ENCODE measurements at regions of chr2 and their contacts with region 1.

Region 1: DNA sequence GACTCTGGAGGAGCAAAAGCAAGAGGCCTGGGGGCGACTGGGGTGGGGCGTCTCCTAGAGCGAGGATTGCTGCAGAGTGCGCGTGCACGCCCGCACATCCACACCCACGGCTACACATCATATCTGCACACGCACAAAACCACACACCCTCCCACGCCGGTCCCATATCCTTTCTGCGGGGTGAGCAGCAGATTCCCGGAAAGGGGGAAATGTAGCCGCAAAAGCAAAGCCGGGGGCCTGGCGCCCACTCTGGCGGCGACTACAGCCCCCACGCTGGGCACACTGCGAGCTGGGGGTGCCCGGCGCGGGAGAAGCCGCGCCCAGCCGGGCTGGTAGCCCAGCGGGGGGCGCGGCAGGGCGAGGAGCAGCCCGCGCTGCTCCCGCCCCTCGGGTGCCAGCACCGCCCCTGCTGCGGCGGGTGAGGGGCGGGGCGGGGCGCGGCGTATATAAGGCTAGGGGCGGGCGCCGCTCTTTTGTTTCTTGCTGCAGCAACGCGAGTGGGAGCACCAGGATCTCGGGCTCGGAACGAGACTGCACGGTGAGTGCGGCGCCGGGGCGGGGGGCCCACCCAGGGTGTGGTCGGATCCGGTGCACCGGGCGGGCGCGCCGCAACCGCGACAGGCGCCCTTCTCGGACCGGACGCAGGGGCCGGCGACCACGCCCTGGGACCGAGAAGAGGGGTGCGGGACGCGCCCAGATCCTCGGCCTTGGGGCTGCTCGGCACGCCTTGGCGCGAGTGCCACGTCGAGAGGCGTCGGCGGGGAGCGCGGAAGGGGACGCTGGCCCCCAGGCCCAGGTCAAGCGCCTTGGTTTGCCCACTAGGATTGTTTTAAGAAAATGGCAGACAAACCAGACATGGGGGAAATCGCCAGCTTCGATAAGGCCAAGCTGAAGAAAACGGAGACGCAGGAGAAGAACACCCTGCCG is at the start of gene TMSB10:
- DNase-seq: peak; percentile 88 to 95 (median 92)
- H3K4me3 ChIP-seq: peak within 1 kb of the TSS; percentile 69 to 92
- H3K4me3 Mint-ChIP-seq: peak within 1 kb of the TSS; percentile 90 to 97 (median 96)
- H3K27ac ChIP-seq: peak within 1 kb of the TSS; percentile 71
- H3K27ac Mint-ChIP-seq: peak within 1 kb of the TSS; percentile 90 to 97 (median 95)
- H3K4me1 ChIP-seq: peaks cover 34% of the 10 kb centered on the region
- H3K4me1 Mint-ChIP-seq: peaks cover 46 to 74% (median 52%) of the 10 kb centered on the region in 4 donors
- H3K27me3 ChIP-seq: no peaks in the 10 kb centered on the region
- H3K27me3 Mint-ChIP-seq: no peaks in the 10 kb centered on the region
- total RNA-seq, gene TMSB10: 1,218 to 1,245 TPM

Region 2: DNA sequence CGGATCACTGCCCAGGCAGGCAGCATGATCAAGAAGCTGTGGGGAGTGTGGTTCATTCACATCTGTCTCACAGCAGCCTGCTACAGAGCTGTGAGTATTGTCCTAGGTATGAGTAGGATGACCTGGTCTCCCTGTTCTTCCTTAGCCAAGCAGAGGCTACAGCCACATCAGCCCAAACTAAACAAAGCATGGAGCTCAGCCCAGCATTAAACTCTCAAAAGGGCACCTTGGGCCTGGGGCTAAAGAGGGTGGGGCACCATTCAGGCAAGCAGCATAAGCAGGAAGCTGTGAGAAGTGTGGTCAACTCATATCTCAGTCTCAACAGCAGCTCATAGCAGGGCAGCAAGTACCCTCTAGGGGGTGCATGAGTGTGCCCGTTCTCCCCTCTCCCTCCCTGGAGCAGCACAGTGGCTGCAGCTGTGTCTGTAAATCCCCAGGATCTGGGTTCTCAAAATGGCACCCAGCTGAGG is 164.1 kb before region 1 on chr2:
- CTCF ChIA-PET with region 1: no interaction called
- POLR2A ChIA-PET with region 1: interaction called, 11 read pairs
- intact Hi-C with region 1: no loop called
- DNase-seq: peak; percentile 47 to 58 (median 51)
- H3K4me3 ChIP-seq: no peak overlapping the region
- H3K4me3 Mint-ChIP-seq: peak overlapping the region in 4 of 8 donors; percentile 12 to 39 (median 28)
- H3K27ac ChIP-seq: no peak overlapping the region
- H3K27ac Mint-ChIP-seq: peak overlapping the region in 6 of 7 donors; percentile 17 to 87 (median 64)
- H3K4me1 ChIP-seq: peaks cover 22% of the 10 kb centered on the region
- H3K4me1 Mint-ChIP-seq: peaks cover 15 to 28% (median 21%) of the 10 kb centered on the region in 4 donors
- H3K27me3 ChIP-seq: no peaks in the 10 kb centered on the region
- H3K27me3 Mint-ChIP-seq: no peaks in the 10 kb centered on the region

Region 3: DNA sequence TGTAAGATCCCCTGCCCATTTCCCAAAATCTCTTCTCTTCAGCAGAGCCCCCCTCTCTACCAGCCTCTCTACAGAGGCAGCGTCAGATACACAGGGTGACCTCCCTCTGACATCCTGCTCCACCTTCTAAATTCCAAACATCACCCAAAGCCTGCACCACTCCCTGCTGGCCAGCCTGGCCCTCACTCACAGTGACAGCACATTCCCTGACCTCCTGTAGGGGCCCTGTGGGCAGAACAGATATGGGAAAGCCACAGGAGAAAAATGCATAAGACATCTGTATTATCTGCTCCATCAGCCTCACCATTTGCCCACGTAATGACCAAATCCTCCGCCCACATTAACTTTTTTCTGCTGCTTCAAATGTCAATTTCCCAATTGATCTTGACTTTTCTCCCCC is 65.1 kb before region 1 on chr2:
- CTCF ChIA-PET with region 1: interaction called, 3 read pairs
- POLR2A ChIA-PET with region 1: interaction called, 35 read pairs
- intact Hi-C with region 1: no loop called
- DNase-seq: peak in 1 of 5 donors; percentile 10
- H3K4me3 ChIP-seq: peak overlapping the region in 1 of 2 donors; percentile 39
- H3K4me3 Mint-ChIP-seq: peak overlapping the region; percentile 63 to 87 (median 80)
- H3K27ac ChIP-seq: peak overlapping the region; percentile 61
- H3K27ac Mint-ChIP-seq: peak overlapping the region; percentile 92 to 98 (median 96)
- H3K4me1 ChIP-seq: peaks cover 88% of the 10 kb centered on the region
- H3K4me1 Mint-ChIP-seq: peaks cover 74 to 91% (median 84%) of the 10 kb centered on the region in 4 donors
- H3K27me3 ChIP-seq: no peaks in the 10 kb centered on the region
- H3K27me3 Mint-ChIP-seq: no peaks in the 10 kb centered on the region

Region 4: GRCh38 chr2:84870306-84870705 is 35.1 kb before region 1 on chr2:
- CTCF ChIA-PET with region 1: interaction called, 6 read pairs
- POLR2A ChIA-PET with region 1: interaction called, 13 read pairs
- intact Hi-C with region 1: no loop called
- DNase-seq: no peak
- H3K4me3 ChIP-seq: no peak overlapping the region
- H3K4me3 Mint-ChIP-seq: peak overlapping the region in 6 of 8 donors; percentile 4 to 74 (median 38)
- H3K27ac ChIP-seq: no peak overlapping the region
- H3K27ac Mint-ChIP-seq: peak overlapping the region; percentile 48 to 93 (median 81)
- H3K4me1 ChIP-seq: peaks cover 75% of the 10 kb centered on the region
- H3K4me1 Mint-ChIP-seq: peaks cover 56 to 87% (median 72%) of the 10 kb centered on the region in 4 donors
- H3K27me3 ChIP-seq: no peaks in the 10 kb centered on the region
- H3K27me3 Mint-ChIP-seq: no peaks in the 10 kb centered on the region

Region 5: GRCh38 chr2:84919885-84920580 is 14.6 kb after region 1 on chr2:
- CTCF ChIA-PET with region 1: interaction called, 267 read pairs
- POLR2A ChIA-PET with region 1: interaction called, 221 read pairs
- intact Hi-C with region 1: loop called (anchors 1 kb)
- DNase-seq: peak in 1 of 5 donors; percentile 44
- H3K4me3 ChIP-seq: no peak overlapping the region
- H3K4me3 Mint-ChIP-seq: peak overlapping the region in 7 of 8 donors; percentile 22 to 71 (median 52)
- H3K27ac ChIP-seq: no peak overlapping the region
- H3K27ac Mint-ChIP-seq: peak overlapping the region; percentile 61 to 88 (median 79)
- H3K4me1 ChIP-seq: peaks cover 45% of the 10 kb centered on the region
- H3K4me1 Mint-ChIP-seq: peaks cover 22 to 48% (median 33%) of the 10 kb centered on the region in 4 donors
- H3K27me3 ChIP-seq: no peaks in the 10 kb centered on the region
- H3K27me3 Mint-ChIP-seq: no peaks in the 10 kb centered on the region

Region 6: GRCh38 chr2:84970868-84971509 is 65.5 kb after region 1 on chr2 and contains the start of gene KCMF1:
- CTCF ChIA-PET with region 1: interaction called, 3 read pairs
- POLR2A ChIA-PET with region 1: interaction called, 37 read pairs
- intact Hi-C with region 1: loop called (anchors 2 kb)
- DNase-seq: peak; percentile 64 to 79 (median 71)
- H3K4me3 ChIP-seq: peak within 1 kb of the TSS; percentile 63 to 90
- H3K4me3 Mint-ChIP-seq: peak within 1 kb of the TSS; percentile 93 to 100 (median 99)
- H3K27ac ChIP-seq: peak within 1 kb of the TSS; percentile 93
- H3K27ac Mint-ChIP-seq: peak within 1 kb of the TSS; percentile 97 to 100 (median 99)
- H3K4me1 ChIP-seq: peaks cover 59% of the 10 kb centered on the region
- H3K4me1 Mint-ChIP-seq: peaks cover 41 to 73% (median 56%) of the 10 kb centered on the region in 4 donors
- H3K27me3 ChIP-seq: no peaks in the 10 kb centered on the region
- H3K27me3 Mint-ChIP-seq: peaks cover 0 to 2% of the 10 kb centered on the region in 2 donors
- total RNA-seq, gene KCMF1: 59.8 to 62.7 TPM

Measured in CD4-positive, alpha-beta memory T cell (primary cell).